A549 (cell line): ENCODE measurements at regions of chr12 and their contacts with region 1.

Region 1: GRCh38 chr12:3202734-3203446 is 125.7 kb downstream of the TSPAN9 start:
- DNase-seq: peak; percentile 47 to 84
- ATAC-seq: peak; percentile 25 to 62; a peak in 3 of 6 replicates
- H3K4me3 ChIP-seq: no peak overlapping the region
- H3K27ac ChIP-seq: no peak overlapping the region
- H3K4me1 ChIP-seq: peaks cover 4% of the 10 kb centered on the region; the same call in 1 of the 3 replicates
- CTCF ChIP-seq: peak; percentile 87
- EP300 ChIP-seq: no peak
- POLR2A ChIP-seq: no peak
- RAD21 ChIP-seq: peak; percentile 64 to 66

Region 2: GRCh38 chr12:3135522-3136461 is 67.1 kb before region 1 on chr12:
- CTCF ChIA-PET with region 1: interaction called, 68 read pairs
- POLR2A ChIA-PET with region 1: no interaction called
- DNase-seq: peak; percentile 83 to 89
- ATAC-seq: peak; percentile 84 to 92
- H3K4me3 ChIP-seq: no peak overlapping the region
- H3K27ac ChIP-seq: no peak overlapping the region; a peak in 1 of 6 replicates
- H3K4me1 ChIP-seq: peaks cover 11% of the 10 kb centered on the region; the same call in 1 of the 3 replicates
- CTCF ChIP-seq: peak; percentile 79
- EP300 ChIP-seq: no peak
- POLR2A ChIP-seq: no peak
- RAD21 ChIP-seq: peak; percentile 93

Region 3: GRCh38 chr12:3150931-3151835 is 51.7 kb before region 1 on chr12:
- CTCF ChIA-PET with region 1: interaction called, 27 read pairs
- POLR2A ChIA-PET with region 1: no interaction called
- DNase-seq: no peak
- ATAC-seq: no peak
- H3K4me3 ChIP-seq: no peak overlapping the region
- H3K27ac ChIP-seq: no peak overlapping the region
- H3K4me1 ChIP-seq: no peaks in the 10 kb centered on the region
- CTCF ChIP-seq: no peak
- EP300 ChIP-seq: no peak
- POLR2A ChIP-seq: no peak
- RAD21 ChIP-seq: no peak

Region 4: DNA sequence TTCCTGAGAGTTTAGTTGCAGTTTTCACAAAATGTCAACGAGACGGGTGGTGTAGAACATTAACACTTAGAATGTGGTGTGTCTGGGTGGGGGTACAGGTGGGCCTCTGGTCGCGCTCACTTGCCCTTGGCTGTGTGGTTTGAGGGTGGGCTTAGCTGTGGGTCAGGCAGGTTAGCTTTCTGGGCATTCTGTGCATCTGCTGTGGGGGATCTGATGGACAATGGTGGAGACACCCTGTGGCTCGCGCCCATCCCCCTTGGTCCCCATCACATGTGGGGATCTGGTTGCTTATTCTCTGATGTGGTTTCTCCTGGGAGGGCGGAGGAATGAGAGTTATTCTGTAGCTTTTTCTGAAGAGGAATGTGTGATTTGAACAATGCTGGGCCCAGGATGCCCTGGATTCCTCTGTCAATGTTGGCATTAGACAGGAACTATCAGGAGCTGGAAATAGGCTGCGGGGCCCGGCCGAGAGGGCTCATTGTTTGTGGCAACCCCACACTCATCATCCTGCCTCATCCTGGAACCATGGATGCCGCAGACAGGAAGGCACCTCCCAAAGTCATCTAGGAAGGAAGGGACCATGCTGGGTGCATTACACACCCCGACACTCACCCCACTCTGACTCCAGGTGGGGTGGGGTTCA is 24.1 kb before region 1 on chr12:
- CTCF ChIA-PET with region 1: interaction called, 17 read pairs
- POLR2A ChIA-PET with region 1: no interaction called
- DNase-seq: no peak
- ATAC-seq: no peak
- H3K4me3 ChIP-seq: no peak overlapping the region
- H3K27ac ChIP-seq: no peak overlapping the region
- H3K4me1 ChIP-seq: 0 out of 3 replicates have a peak, but pooled peaks cover 3% of the 10 kb centered on the region
- CTCF ChIP-seq: no peak
- EP300 ChIP-seq: no peak
- POLR2A ChIP-seq: no peak
- RAD21 ChIP-seq: no peak

Region 5: DNA sequence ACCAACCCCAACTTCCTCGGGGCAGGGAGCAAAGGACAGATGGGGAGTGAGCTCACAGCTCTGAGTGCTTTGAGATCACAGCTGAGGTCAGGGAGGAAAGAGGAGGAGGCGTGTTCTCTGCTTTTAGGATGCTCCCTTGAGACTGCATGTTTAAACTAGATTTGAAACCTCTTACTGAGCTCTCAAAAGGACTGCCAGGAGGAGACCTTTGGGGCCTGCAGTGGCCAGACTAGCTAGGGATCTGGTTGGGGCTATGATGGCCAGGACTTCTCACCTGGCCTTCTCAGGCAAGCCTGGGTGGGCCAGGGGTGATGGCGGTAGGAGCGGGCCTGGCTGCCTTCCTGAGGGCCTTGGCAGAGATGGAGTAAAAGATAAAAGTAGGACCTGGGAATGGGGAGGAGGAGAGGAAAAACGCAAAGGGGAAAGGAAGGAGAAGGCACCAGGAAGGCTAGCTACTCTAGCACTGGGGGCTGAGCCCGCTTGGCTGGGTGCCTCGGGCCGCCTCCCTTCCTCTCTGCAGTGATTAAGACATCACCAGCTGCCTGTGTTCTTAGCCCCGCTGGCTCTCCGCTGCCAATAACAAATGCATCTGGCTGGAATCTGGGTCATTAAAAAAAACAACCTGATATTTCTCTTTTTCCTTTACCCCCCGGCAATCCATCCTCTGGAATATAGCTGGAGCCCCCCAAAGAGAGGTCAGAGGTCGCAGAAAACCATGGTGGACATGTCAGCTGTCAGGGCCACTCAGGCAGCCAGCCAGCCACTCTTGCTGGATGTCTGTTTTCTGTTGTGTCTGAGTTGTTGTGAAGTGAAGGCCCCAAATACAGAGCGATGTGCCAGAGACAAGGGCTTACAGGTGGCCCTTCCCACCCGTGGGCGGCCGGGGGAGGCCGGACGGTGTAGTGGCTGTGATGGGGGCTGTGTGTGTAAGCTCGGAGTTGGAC is 15.6 kb after region 1 on chr12:
- CTCF ChIA-PET with region 1: interaction called, 61 read pairs
- POLR2A ChIA-PET with region 1: no interaction called
- DNase-seq: no peak
- ATAC-seq: peak in 1 of 2 experiments; percentile 29; a peak in 1 of 6 replicates
- H3K4me3 ChIP-seq: no peak overlapping the region
- H3K27ac ChIP-seq: no peak overlapping the region
- H3K4me1 ChIP-seq: no peaks in the 10 kb centered on the region
- CTCF ChIP-seq: no peak
- EP300 ChIP-seq: no peak
- POLR2A ChIP-seq: no peak
- RAD21 ChIP-seq: no peak

Region 6: GRCh38 chr12:3236345-3237187 is 33.7 kb after region 1 on chr12:
- CTCF ChIA-PET with region 1: interaction called, 10 read pairs
- POLR2A ChIA-PET with region 1: no interaction called
- DNase-seq: peak; percentile 40 to 44
- ATAC-seq: peak; percentile 68 to 89
- H3K4me3 ChIP-seq: no peak overlapping the region
- H3K27ac ChIP-seq: no peak overlapping the region
- H3K4me1 ChIP-seq: peaks cover 3% of the 10 kb centered on the region; the same call in 1 of the 3 replicates
- CTCF ChIP-seq: no peak
- EP300 ChIP-seq: no peak
- POLR2A ChIP-seq: no peak
- RAD21 ChIP-seq: no peak

Region 7: GRCh38 chr12:3249081-3249800 is 46.4 kb after region 1 on chr12:
- CTCF ChIA-PET with region 1: no interaction called
- POLR2A ChIA-PET with region 1: no interaction called
- DNase-seq: no peak
- ATAC-seq: no peak
- H3K4me3 ChIP-seq: no peak overlapping the region
- H3K27ac ChIP-seq: no peak overlapping the region
- H3K4me1 ChIP-seq: no peaks in the 10 kb centered on the region
- CTCF ChIP-seq: no peak
- EP300 ChIP-seq: no peak
- POLR2A ChIP-seq: no peak
- RAD21 ChIP-seq: no peak